Posterior cingulate gyrus (tissue), 11 donors: ENCODE measurements at regions of chr7 and their contacts with region 1.

Region 1: GRCh38 chr7:44240983-44241510 is 40.3 kb downstream of the YKT6 start:
- DNase-seq: peak; percentile 50 to 95 (median 70)

Region 2: DNA sequence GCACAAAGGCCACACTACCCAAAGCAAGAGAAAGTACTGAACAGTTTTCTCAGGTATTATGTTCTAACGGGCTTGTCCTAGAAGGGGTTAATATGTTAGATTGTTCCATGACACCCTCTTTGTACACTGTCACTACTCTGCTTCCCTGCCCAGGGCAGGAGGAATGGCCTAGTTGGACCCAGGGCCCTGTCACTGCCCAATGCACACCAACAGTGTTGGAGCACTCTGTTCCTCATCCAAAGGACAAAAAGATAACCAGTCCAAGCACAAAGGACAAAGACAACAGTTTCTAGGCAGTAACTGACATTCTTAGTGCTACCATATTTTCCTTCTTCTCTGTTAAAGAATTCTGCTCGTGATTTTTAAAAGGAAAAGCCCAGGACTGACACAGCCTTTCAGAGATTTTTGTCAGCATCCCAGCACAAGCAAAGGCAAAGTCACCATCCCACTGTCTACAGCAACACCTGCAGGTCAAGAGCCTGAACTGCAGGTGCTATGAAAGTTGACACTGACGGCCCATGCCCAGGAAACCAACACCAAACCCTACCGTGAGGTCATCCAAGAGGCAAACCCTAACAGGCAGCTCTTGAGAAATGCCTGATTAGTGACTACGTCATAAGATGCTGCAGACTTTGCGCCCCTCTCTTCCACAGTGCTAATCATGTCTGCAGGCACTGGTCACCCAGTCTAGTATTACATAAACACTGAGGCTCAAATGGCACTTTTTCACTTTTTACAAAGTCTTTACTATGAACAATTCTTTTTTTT is 236.2 kb after region 1 on chr7:
- intact Hi-C with region 1: loop called (anchors 1 kb)
- DNase-seq: peak in 8 of 10 donors; percentile 38 to 93 (median 64)

Region 3: DNA sequence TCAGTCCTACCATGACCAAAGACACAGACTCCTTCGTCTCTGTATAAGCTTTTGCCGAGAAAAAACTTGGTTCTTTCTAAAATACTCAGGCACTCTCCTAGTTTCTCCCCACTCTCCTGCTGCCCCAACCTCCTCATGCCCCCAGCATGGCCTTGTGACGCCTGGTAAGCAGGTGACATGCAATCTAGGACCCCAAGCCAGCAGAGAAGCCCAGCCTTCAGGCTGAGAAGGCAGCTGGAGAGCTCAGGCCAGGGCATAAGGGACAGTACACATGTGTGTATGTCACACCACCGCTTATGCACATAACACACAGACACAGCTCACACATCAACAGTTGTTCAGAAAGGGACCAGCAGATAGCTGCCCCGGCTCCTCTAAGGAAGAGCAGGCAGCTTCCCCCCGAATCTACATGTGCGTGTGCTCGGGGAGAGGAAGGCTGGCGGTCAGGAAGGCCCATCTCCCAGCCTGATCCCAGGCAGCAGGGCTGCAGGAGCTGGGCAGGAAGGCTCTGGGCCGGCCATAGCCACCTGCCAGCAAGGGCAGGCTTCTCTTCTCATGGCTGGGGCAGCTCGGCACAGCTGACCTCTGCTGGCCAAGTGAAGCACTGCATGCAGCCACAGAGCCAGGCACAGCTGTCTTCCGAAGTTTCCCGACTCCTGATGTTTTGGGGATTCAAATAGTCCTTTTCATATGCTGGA is 324.2 kb after region 1 on chr7:
- intact Hi-C with region 1: loop called (anchors 10 kb)
- DNase-seq: peak; percentile 59 to 96 (median 71)